ENCODE measurements at regions of chr2 and their contacts with region 1.

Region 1: GRCh38 chr2:36450466-36451196 is 95.1 kb downstream of the CRIM1 start:
- DNase-seq: peak; percentile 37
- ATAC-seq: peak; percentile 37; the same call in 1 of the 3 replicates
- H3K4me3 ChIP-seq: no peak overlapping the region
- H3K27ac ChIP-seq: no peak overlapping the region
- H3K4me1 ChIP-seq: peaks cover 73% of the 10 kb centered on the region
- H3K27me3 ChIP-seq: no peaks in the 10 kb centered on the region
- CTCF ChIP-seq: no peak
- EP300 ChIP-seq: no peak
- POLR2A ChIP-seq: no peak
- RAD21 ChIP-seq: no peak

Region 2: DNA sequence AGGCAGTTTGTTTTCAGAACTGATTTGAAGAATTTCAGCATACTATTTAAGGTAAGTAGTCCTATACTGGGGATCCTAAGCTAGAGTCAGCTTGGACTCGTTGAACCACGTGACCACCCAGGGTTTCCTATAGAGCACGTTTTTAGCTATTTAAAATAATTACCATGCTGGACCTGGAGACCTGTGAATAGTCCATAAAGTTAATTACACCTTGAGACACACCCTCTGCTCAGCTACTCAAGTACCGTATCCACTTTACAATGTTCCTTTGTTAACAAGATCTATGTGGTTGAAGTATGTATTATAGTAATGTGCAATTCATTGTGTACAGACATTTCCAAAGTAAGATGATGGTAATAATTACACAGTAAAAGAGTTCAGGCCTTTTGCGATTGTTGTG is 27.5 kb before region 1 on chr2:
- CTCF ChIA-PET with region 1: no interaction called
- POLR2A ChIA-PET with region 1: no interaction called
- in situ Hi-C with region 1: no loop called
- intact Hi-C with region 1: no loop called
- DNase-seq: no peak
- ATAC-seq: no peak
- H3K4me3 ChIP-seq: no peak overlapping the region
- H3K27ac ChIP-seq: no peak overlapping the region
- H3K4me1 ChIP-seq: peaks cover 9% of the 10 kb centered on the region
- H3K27me3 ChIP-seq: no peaks in the 10 kb centered on the region
- CTCF ChIP-seq: no peak
- EP300 ChIP-seq: no peak
- POLR2A ChIP-seq: no peak
- RAD21 ChIP-seq: no peak

Region 3: GRCh38 chr2:36433311-36434217 is 17.1 kb before region 1 on chr2:
- CTCF ChIA-PET with region 1: no interaction called
- POLR2A ChIA-PET with region 1: interaction called, 3 read pairs
- in situ Hi-C with region 1: no loop called
- intact Hi-C with region 1: loop called (anchors 2 kb)
- DNase-seq: peak; percentile 97
- ATAC-seq: peak; percentile 98
- H3K4me3 ChIP-seq: no peak overlapping the region; a peak in 1 of 6 replicates
- H3K27ac ChIP-seq: peak overlapping the region; percentile 5
- H3K4me1 ChIP-seq: peaks cover 34% of the 10 kb centered on the region
- H3K27me3 ChIP-seq: no peaks in the 10 kb centered on the region
- CTCF ChIP-seq: no peak
- EP300 ChIP-seq: peak; percentile 39 to 80; a peak in 3 of 4 replicates
- POLR2A ChIP-seq: no peak
- RAD21 ChIP-seq: peak; percentile 16; the same call in 1 of the 2 replicates

Region 4: GRCh38 chr2:37537316-37537715 is 1086.7 kb after region 1 on chr2:
- CTCF ChIA-PET with region 1: no interaction called
- POLR2A ChIA-PET with region 1: no interaction called
- in situ Hi-C with region 1: no loop called
- intact Hi-C with region 1: no loop called
- DNase-seq: no peak
- ATAC-seq: no peak
- H3K4me3 ChIP-seq: no peak overlapping the region
- H3K27ac ChIP-seq: no peak overlapping the region
- H3K4me1 ChIP-seq: no peaks in the 10 kb centered on the region
- H3K27me3 ChIP-seq: no peaks in the 10 kb centered on the region
- CTCF ChIP-seq: no peak
- EP300 ChIP-seq: no peak
- POLR2A ChIP-seq: no peak
- RAD21 ChIP-seq: no peak